ENCODE measurements at regions of chr19 and their contacts with region 1.

Region 1: GRCh38 chr19:13794757-13795589 is at the start of gene ZSWIM4:
- DNase-seq: peak; percentile 96 to 100 (median 99)

Region 2: DNA sequence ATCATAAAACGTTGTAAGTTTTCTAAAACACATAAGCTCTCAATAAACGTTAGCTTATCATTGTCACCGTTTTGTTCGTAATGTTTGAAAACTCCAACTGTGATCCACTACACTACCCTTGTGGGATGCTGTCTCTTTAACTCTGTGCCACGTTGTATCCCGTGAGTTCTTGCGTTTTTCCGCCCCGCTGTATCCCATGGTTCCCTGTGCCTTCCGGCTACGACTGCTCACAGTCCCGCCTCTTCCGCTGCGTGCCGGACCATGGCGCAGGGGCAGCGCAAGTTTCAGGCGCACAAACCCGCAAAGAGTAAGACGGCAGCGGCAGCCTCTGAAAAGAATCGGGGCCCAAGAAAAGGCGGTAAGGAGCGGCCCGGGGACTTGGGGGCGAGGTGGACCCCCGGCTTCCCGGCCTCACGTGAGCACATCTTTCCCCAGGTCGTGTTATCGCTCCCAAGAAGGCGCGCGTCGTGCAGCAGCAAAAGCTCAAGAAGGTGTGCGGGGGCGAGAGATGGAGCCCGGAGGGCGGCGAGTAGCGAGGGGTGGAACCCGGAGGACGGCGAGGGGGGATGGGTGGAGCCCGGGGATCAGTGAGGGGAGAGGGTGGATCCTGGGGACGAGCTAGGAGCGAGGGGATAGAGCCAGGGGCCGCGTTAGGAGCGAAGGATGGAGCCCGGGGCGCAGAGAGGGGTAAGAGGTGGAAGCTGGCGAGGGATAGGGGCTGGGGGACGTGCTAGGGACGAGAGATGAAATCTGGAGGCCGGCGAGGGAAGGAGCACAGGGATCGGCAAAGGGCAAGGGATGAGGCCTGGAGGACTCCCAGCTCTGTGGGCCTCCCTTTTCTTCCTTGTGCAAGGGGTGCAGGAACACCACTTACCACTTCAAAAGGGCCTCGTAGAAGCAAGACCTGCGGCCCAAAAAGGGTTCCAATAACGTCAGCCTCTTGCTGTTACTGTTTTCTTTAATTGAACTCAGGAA is 20.5 kb before region 1 on chr19 and contains the start of gene C19orf53:
- intact Hi-C with region 1: loop called (anchors 1 kb)
- DNase-seq: peak; percentile 87 to 99 (median 94)

Region 3: DNA sequence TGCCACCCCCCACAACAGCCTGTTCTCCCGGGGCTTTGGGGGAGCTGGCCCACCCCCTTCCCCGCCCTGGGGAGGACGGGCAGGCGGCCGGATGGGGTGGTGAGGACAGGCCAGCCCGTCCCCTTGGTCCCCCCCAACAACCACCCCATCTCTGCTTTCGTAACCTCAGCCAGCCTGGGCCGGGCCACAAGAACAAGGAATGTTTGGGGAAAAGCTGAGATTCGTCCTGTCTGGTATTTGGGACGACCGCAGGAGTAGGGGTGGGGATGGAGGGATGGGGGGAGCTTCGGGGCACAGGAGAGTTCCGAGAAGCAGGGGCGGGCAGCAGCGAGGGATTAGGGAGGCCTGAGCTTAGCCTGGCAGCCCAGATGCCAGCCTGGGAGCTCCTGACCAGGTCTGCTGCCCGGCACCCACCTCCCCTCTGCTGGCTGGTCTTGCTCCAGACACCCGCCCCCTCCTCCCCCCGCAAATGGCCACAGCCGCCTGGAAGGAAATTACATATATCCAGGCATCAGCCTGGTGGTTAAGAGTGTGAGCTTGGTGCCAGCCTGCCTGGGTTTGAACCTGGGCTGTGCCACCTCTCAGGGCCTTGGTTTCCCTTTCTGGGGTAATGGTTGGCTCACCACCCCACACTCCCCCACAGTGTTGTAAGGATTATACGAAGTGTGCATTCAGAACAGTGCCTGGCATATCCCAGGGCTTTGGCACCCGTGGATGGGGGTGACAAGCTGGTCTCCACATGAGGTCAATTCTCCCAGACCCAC is 143.5 kb after region 1 on chr19 and contains the start of gene PODNL1:
- intact Hi-C with region 1: no loop called
- DNase-seq: no peak